Thyroid gland (tissue), 4 donors: ENCODE measurements at regions of chr6 and their contacts with region 1.

Region 1: GRCh38 chr6:146700078-146700686 is 101.4 kb downstream of the ADGB start:
- DNase-seq: peak; percentile 85 to 87
- H3K4me3 ChIP-seq: no peak overlapping the region
- H3K27ac ChIP-seq: no peak overlapping the region
- H3K4me1 ChIP-seq: no peaks in the 10 kb centered on the region
- H3K27me3 ChIP-seq: no peaks in the 10 kb centered on the region
- CTCF ChIP-seq: peak; percentile 16 to 88 (median 78)
- POLR2A ChIP-seq: no peak

Region 2: GRCh38 chr6:145929037-145929633 is 771.0 kb before region 1 on chr6:
- intact Hi-C with region 1: loop called (anchors 10 kb)
- DNase-seq: no peak
- H3K4me3 ChIP-seq: no peak overlapping the region
- H3K27ac ChIP-seq: no peak overlapping the region
- H3K4me1 ChIP-seq: no peaks in the 10 kb centered on the region
- H3K27me3 ChIP-seq: no peaks in the 10 kb centered on the region
- CTCF ChIP-seq: peak in 4 of 6 experiments; percentile 44 to 62 (median 58)
- POLR2A ChIP-seq: no peak